Gastrocnemius medialis (tissue), 4 donors: ENCODE measurements at regions of chr1 and their contacts with region 1.

Region 1: GRCh38 chr1:150876119-150876454 is 312 bp downstream of the ARNT start:
- DNase-seq: peak in 1 of 2 donors; percentile 59
- ATAC-seq: peak; percentile 35 to 53
- H3K4me3 ChIP-seq: peak overlapping the region; percentile 95 to 100 (median 99)
- H3K27ac ChIP-seq: peak overlapping the region; percentile 99 to 100 (median 100)
- H3K4me1 ChIP-seq: peaks cover 15 to 19% of the 10 kb centered on the region in 2 donors
- H3K27me3 ChIP-seq: no peaks in the 10 kb centered on the region
- CTCF ChIP-seq: no peak
- POLR2A ChIP-seq: no peak

Region 2: DNA sequence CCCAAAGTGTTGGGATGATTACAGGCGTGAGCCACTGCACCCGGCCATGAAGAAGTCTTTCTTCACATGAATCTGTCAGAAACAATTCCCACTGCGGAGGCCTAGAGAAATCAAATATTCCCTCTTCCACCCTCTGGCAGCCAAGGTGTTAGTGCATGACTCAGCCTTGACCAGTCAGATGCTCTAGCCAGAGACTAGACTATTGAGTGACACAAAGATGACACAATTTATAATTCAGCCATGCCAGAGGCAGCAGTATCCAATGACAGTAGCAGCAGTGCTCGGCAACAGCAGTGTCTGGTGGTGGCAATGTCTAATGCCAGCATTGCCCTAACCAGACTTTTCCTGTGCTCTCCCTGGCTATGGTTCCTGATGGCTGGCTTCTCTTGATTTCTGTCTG is 19.5 kb after region 1 on chr1:
- in situ Hi-C with region 1: no loop called
- intact Hi-C with region 1: loop called (anchors 1 kb)
- DNase-seq: peak; percentile 72 to 89
- ATAC-seq: peak; percentile 100
- H3K4me3 ChIP-seq: no peak overlapping the region
- H3K27ac ChIP-seq: peak overlapping the region; percentile 81 to 90 (median 86)
- H3K4me1 ChIP-seq: peaks cover 6 to 8% of the 10 kb centered on the region in 2 donors
- H3K27me3 ChIP-seq: no peaks in the 10 kb centered on the region
- CTCF ChIP-seq: no peak
- POLR2A ChIP-seq: no peak

Region 3: GRCh38 chr1:151001602-151002001 is 125.5 kb after region 1 on chr1:
- in situ Hi-C with region 1: no loop called
- intact Hi-C with region 1: loop called (anchors 5 kb)
- DNase-seq: no peak
- ATAC-seq: no peak
- H3K4me3 ChIP-seq: no peak overlapping the region
- H3K27ac ChIP-seq: no peak overlapping the region
- H3K4me1 ChIP-seq: peaks cover 36 to 40% of the 10 kb centered on the region in 2 donors
- H3K27me3 ChIP-seq: no peaks in the 10 kb centered on the region
- CTCF ChIP-seq: no peak
- POLR2A ChIP-seq: no peak

Region 4: GRCh38 chr1:151085953-151086559 is 210.0 kb after region 1 on chr1:
- in situ Hi-C with region 1: no loop called
- intact Hi-C with region 1: no loop called
- DNase-seq: no peak
- ATAC-seq: no peak
- H3K4me3 ChIP-seq: no peak overlapping the region
- H3K27ac ChIP-seq: no peak overlapping the region
- H3K4me1 ChIP-seq: no peaks in the 10 kb centered on the region
- H3K27me3 ChIP-seq: no peaks in the 10 kb centered on the region
- CTCF ChIP-seq: no peak
- POLR2A ChIP-seq: no peak